PC-9 (cell line): ENCODE measurements at regions of chr2 and their contacts with region 1.

Region 1: DNA sequence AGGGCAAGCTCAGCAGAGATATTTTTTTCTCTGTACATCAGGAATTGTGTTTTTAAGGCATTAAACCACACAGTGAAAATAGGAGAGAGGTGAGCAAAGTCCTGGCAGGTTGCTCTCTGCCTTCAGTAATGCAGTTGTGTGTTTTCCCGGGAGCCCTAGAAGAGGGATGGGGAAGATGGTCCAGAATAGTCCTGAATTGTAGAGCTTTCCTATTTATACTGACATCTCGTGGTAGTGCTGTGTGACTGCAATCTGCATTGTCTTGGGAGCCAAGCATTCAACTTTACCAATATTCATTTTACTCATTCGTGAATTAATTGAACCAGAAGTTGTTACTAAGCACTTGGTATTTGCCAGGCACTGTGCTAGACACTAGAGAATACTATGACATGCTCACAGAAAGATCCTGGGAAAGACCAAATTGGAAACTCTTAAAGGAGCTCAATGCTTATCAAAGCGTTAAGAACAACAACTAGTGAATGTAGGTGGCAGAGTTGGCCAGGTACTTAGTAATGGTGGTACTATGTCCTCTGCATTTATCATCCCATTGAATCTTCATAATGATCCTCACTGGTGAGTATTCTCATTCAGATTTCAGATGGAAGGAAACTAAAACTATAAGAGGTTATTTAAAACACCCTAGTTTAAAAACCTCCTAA is 214.6 kb downstream of the TRIB2 start:
- DNase-seq: peak in 1 of 2 experiments; percentile 53
- H3K4me3 ChIP-seq: no peak overlapping the region
- H3K27ac ChIP-seq: peak overlapping the region; percentile 85
- H3K4me1 ChIP-seq: peaks cover 35% of the 10 kb centered on the region
- H3K27me3 ChIP-seq: no peaks in the 10 kb centered on the region
- CTCF ChIP-seq: peak; percentile 80

Region 2: GRCh38 chr2:12856934-12857601 is 74.2 kb before region 1 on chr2:
- CTCF ChIA-PET with region 1: interaction called, 6 read pairs
- POLR2A ChIA-PET with region 1: no interaction called
- intact Hi-C with region 1: loop called (anchors 2 kb)
- DNase-seq: peak; percentile 31 to 98
- H3K4me3 ChIP-seq: peak overlapping the region; percentile 30; the same call in 1 of the 2 replicates
- H3K27ac ChIP-seq: peak overlapping the region; percentile 92
- H3K4me1 ChIP-seq: peaks cover 46% of the 10 kb centered on the region
- H3K27me3 ChIP-seq: no peaks in the 10 kb centered on the region
- CTCF ChIP-seq: no peak

Region 3: GRCh38 chr2:12884713-12885282 is 46.5 kb before region 1 on chr2:
- CTCF ChIA-PET with region 1: interaction called, 12 read pairs
- POLR2A ChIA-PET with region 1: no interaction called
- intact Hi-C with region 1: loop called (anchors 1 kb)
- DNase-seq: peak; percentile 72 to 99
- H3K4me3 ChIP-seq: no peak overlapping the region; the same call in 1 of the 2 replicates
- H3K27ac ChIP-seq: peak overlapping the region; percentile 91
- H3K4me1 ChIP-seq: peaks cover 37% of the 10 kb centered on the region
- H3K27me3 ChIP-seq: no peaks in the 10 kb centered on the region
- CTCF ChIP-seq: no peak

Region 4: DNA sequence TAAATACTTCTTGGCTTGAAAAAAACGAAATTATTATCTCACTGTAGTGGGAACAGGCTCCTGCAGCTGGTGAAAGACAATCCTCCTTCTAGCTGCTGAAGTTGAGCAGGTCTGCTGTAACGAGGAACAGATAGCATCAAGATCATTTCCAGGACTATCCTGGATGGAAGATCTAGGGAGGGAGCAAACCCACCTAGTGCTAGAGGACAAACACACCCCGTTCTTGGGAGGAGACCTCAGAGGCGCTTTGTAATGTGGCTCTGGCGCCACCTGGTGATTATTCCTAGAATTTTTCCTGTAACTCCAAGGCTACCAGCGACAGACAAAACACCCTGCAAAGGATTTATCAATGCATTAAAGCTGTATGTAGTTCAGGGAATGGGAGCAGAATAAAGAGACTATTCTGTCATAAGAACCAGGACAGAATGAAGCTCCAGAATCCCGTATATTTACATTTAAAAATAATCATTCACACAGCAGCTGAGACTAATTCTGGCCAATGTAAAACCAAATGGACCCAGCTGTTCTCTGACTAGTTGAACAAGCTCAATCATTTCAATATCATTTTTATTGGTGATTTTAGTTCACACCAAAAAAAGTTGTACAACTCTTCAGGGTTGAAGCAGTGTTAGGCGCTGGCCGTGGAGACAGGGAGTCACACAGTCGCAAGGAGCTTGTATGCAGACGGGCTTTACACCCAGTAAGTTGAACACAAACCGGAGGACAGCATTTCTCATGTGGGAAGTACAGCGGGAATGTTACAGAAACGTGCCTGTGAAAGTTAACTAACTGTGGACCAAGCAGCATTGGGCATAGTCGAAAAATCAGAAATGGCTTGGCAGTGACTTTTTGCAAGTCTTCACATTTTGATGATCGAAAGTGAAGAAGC is 75.8 kb after region 1 on chr2:
- CTCF ChIA-PET with region 1: no interaction called
- POLR2A ChIA-PET with region 1: no interaction called
- intact Hi-C with region 1: loop called (anchors 5 kb)
- DNase-seq: peak; percentile 56 to 61
- H3K4me3 ChIP-seq: no peak overlapping the region
- H3K27ac ChIP-seq: no peak overlapping the region
- H3K4me1 ChIP-seq: peaks cover 9% of the 10 kb centered on the region; the same call in 1 of the 2 replicates
- H3K27me3 ChIP-seq: no peaks in the 10 kb centered on the region
- CTCF ChIP-seq: peak; percentile 98